GM10248 (cell line): ENCODE measurements at regions of chr14 and their contacts with region 1.

Region 1: DNA sequence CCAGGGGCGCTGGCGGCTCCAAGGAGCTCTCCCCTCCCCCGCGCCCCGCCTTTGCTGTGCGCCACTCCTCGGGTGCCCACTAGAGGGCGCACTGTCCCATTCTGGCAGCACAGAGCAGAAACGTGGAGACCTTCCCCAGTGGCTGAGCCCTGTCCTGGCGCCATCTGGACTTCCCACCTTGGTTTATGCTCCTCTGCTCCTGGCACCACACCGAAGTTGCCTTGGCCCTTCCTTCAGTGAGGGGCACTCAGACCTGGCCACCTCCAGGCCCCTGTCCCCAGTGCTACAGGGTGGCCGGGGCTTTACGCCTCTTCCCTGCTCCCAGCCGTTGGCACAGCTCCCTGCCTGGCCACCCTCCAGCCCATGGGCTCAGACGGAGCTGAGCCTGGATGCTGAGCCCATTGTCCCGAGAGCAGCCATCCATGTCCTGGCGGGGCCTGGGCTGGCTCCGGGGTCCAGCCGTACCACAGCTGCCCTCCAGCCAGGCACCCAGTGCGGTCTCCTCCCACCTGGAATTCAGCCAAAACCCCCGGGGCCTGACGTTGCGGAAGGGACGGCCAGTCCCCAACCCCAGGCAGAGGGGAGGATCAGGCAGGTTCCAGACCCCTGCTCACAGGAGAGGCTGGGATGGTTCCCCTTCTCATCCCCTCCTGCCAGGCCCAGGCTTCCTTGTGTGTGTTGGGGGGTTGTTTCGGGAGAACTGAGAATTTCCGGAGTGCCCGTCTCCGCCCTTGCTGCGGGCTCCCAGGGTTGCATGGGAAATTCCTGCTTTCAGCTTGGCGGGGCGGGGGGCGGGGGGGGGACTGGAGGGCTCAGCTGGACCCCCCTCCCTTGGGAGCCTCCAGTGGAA is 5.5 kb upstream of the CRIP1 start:
- DNase-seq: peak; percentile 93
- CTCF ChIP-seq: peak; percentile 99

Region 2: GRCh38 chr14:105337966-105338741 is 143.0 kb before region 1 on chr14:
- CTCF ChIA-PET with region 1: no interaction called
- POLR2A ChIA-PET with region 1: no interaction called
- DNase-seq: no peak
- CTCF ChIP-seq: no peak

Region 3: DNA sequence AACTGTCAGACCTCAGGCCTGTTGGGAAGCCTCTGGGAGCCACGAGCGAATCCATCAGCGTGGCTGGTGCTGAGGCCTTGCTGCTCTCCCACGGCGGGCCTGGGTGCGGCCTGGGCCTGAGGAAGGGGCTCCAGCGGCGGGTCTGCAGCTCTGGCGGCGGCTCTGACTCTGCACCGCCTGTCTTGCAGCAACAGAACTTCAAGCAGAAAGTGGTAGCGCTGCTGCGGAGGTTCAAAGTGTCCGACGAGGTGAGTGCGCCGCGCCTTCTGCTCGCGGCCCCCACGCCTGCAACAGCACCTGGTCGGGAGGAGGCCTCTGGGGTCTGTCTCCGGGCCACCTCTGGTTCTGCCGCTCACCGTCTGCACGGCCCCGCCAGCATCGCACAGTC is 111.5 kb before region 1 on chr14:
- CTCF ChIA-PET with region 1: interaction called, 24 read pairs
- POLR2A ChIA-PET with region 1: no interaction called
- DNase-seq: no peak
- CTCF ChIP-seq: no peak

Region 4: GRCh38 chr14:105389976-105390848 is 91.0 kb before region 1 on chr14:
- CTCF ChIA-PET with region 1: interaction called, 10 read pairs
- POLR2A ChIA-PET with region 1: no interaction called
- DNase-seq: no peak
- CTCF ChIP-seq: no peak

Region 5: GRCh38 chr14:105414456-105415371 is 66.5 kb before region 1 on chr14:
- CTCF ChIA-PET with region 1: interaction called, 11 read pairs
- POLR2A ChIA-PET with region 1: no interaction called
- DNase-seq: peak; percentile 85
- CTCF ChIP-seq: peak; percentile 69

Region 6: DNA sequence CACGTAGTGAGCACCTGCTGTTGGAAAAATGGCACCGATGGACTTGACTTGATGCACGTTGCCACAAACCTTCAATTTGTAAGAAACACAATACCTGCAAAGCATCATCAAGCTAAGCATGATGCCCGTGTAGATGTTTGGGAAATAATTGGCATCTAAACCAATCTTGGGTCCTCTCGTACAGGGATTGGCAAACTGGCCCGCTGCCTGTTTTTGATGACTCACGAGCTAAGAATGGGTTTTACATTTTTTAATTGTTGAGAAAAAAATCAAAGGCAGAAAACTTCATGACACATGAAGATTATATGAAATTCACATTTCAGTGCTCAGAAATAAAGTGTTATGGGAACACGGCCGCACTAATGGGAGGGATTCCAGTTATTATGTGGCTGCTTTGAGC is 50.6 kb before region 1 on chr14:
- CTCF ChIA-PET with region 1: interaction called, 10 read pairs
- POLR2A ChIA-PET with region 1: interaction called, 3 read pairs
- DNase-seq: no peak
- CTCF ChIP-seq: no peak

Region 7: DNA sequence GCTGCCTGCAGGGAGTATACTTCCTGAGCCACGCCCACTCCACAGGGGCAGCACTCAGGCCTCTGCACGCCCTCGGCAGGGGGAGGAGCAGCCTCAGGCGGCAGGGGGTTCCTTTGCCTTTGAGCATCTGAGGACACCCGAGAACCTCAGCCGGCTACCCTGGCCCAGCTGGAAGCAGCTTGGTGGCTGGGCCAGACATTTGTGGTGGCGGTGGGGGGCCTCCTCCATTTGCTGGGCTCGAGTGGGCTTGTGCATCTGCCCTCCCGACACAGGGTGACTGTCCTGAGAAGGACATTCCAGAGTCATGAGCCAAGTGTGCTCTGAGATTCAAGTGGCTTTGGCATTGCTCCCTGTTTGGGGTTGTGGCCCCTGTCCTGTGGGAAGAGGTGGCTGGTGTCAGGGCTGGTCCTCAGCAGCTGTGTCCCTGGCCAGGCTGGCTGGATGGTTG is 15.6 kb before region 1 on chr14:
- CTCF ChIA-PET with region 1: interaction called, 35 read pairs
- POLR2A ChIA-PET with region 1: no interaction called
- DNase-seq: no peak
- CTCF ChIP-seq: no peak

Region 8: DNA sequence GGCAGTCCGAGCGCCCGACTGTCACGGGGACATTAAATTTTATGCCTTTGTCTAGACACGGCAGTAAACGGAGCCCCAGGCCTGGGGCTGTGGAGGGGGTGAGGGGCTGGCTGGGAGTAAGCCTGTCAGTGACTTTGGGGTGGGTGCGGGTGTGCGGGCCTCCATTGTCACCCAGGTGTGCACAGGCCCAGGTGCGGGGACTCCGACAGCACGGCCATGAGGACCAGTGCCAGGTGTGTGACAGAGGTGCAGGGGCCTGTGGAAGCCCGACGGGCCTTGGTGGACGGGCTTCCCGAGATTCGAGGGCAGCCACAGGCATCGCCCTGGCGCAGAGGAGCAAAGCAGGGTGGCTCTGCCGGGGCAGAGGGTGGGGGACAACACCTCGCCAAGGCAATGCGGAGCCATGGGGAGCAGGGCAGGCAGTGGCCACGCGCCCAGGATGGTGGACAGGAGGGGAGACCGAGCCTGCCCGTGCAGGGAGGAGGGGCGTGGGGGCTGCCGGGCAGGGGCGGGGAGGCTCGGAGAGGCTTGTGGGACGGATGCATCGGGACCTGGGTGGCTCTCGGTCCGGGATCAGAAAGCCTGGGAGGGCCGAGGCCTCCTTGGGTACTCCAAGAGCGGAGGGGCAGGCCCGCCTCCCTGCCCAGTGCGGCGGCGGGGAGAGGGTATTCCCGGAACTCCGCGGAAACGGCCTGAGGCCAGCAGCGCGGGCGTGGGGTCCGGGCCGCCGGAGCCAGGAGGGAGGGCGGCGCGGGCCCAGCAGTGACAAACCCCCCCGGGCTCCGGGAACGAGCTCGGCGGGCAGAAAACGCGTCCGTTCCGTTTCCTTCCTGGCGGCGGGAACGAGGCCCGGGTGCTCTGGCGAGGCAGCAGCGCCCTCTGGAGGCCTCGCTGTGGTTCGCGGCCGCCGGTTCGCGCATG is 46.7 kb after region 1 on chr14:
- CTCF ChIA-PET with region 1: interaction called, 14 read pairs
- POLR2A ChIA-PET with region 1: no interaction called
- DNase-seq: peak; percentile 93
- CTCF ChIP-seq: peak; percentile 95